H1 (cell line): ENCODE measurements at regions of chr18 and their contacts with region 1.

Region 1: DNA sequence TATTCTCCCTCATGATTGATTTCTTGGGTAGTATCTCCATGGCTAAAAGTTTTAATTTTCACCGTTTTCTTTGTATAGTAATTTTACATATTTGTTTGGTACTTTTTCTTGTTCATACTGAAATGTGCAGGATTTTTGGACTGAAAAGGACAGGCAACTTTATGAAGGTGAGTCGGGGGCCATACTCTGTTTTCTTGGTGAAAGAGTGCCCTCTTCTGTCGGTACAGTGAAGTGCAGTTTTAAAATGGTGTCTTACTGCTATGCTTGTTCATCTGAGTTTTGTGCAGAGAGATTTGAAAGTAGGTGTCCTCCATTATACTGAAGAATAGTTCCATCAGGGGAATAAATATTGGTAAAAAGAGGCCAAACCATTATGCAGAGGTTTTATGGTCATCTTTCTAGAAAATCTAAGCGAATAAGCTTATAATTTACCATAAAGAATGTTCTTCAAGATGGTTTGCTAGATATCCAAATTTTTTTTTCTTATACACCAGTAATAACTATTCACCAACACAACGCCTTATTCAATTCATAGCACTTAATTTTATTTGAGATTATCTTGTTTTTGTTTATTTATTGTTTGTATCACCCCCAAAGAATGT is 8.7 kb upstream of the SERPINB13 start:
- DNase-seq: peak in 1 of 2 experiments; percentile 64
- H3K4me3 ChIP-seq: no peak overlapping the region
- H3K27ac ChIP-seq: no peak overlapping the region
- H3K4me1 ChIP-seq: no peaks in the 10 kb centered on the region
- H3K27me3 ChIP-seq: no peaks in the 10 kb centered on the region
- CTCF ChIP-seq: peak in 2 of 3 experiments; percentile 75 to 77; a peak in 3 of 4 replicates
- EP300 ChIP-seq: no peak
- POLR2A ChIP-seq: no peak
- RAD21 ChIP-seq: peak; percentile 89 to 92

Region 2: DNA sequence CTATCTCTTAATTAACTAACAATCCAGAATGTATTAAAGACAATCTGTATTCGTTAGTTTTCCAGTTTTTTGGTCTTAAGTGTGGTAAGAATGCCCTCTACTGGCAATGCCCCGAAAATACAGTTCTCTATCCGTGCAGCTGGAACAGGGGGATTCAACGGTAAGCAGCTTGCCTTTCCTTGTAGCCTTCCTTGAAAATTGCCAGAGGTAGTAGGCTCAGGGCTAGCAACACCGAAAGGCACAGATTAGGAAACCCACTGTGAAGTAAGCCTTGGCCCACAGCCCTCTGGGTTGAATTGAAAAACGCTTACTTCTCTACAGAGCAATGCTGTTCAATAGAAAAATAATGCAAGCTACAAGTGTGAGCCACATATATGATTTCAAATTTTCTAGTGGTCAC is 139.1 kb before region 1 on chr18:
- CTCF ChIA-PET with region 1: interaction called, 10 read pairs
- POLR2A ChIA-PET with region 1: no interaction called
- DNase-seq: peak; percentile 43 to 61
- H3K4me3 ChIP-seq: no peak overlapping the region
- H3K27ac ChIP-seq: no peak overlapping the region
- H3K4me1 ChIP-seq: no peaks in the 10 kb centered on the region
- H3K27me3 ChIP-seq: no peaks in the 10 kb centered on the region
- CTCF ChIP-seq: peak; percentile 13 to 83 (median 70)
- EP300 ChIP-seq: no peak
- POLR2A ChIP-seq: no peak
- RAD21 ChIP-seq: peak; percentile 86

Region 3: DNA sequence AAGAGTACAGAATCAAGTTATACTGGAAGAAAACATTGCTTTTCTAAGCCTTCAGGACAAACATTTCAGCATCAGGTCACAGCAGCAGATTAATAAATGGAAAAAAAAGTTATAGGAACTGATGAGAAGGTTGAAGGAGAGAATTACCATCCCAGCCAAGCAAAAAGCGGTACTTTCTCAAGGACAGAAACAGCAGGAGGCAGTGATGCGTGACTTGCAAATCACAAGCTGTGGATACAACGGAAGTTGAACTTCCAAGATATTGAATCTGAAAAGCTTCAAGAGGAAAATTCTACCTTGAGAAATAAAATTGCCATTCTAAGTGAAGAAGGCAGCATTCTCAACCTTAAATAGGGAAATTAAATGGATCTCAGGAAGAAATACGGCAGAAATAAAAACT is 54.8 kb before region 1 on chr18:
- CTCF ChIA-PET with region 1: interaction called, 366 read pairs
- POLR2A ChIA-PET with region 1: no interaction called
- DNase-seq: no peak
- H3K4me3 ChIP-seq: no peak overlapping the region
- H3K27ac ChIP-seq: no peak overlapping the region
- H3K4me1 ChIP-seq: no peaks in the 10 kb centered on the region
- H3K27me3 ChIP-seq: no peaks in the 10 kb centered on the region
- CTCF ChIP-seq: no peak
- EP300 ChIP-seq: no peak
- POLR2A ChIP-seq: no peak
- RAD21 ChIP-seq: no peak

Region 4: DNA sequence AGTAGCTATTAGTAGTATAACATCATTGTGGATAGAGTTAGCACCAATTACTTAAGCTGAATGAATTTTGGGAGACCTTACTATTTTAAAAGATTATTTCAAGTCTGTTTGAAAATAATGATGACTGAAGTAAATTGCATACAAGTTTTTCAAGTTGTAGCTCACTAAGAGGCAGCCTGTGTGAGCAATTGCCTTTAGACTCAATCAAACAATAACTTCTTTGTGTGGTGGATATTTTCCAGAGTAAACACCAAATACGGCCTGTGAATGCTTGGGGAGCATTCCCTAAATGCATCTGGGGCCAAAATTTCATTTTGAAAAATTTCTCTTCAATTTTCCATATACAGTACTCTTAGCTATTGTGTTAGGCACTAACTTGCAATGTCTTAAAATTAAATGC is 28.4 kb before region 1 on chr18:
- CTCF ChIA-PET with region 1: interaction called, 16 read pairs
- POLR2A ChIA-PET with region 1: no interaction called
- DNase-seq: no peak
- H3K4me3 ChIP-seq: no peak overlapping the region
- H3K27ac ChIP-seq: no peak overlapping the region
- H3K4me1 ChIP-seq: no peaks in the 10 kb centered on the region
- H3K27me3 ChIP-seq: no peaks in the 10 kb centered on the region
- CTCF ChIP-seq: no peak
- EP300 ChIP-seq: no peak
- POLR2A ChIP-seq: no peak
- RAD21 ChIP-seq: no peak

Region 5: GRCh38 chr18:63676526-63676925 is 98.1 kb after region 1 on chr18:
- CTCF ChIA-PET with region 1: interaction called, 19 read pairs
- POLR2A ChIA-PET with region 1: no interaction called
- DNase-seq: no peak
- H3K4me3 ChIP-seq: no peak overlapping the region
- H3K27ac ChIP-seq: no peak overlapping the region
- H3K4me1 ChIP-seq: no peaks in the 10 kb centered on the region
- H3K27me3 ChIP-seq: no peaks in the 10 kb centered on the region
- CTCF ChIP-seq: peak; percentile 66 to 81 (median 77)
- EP300 ChIP-seq: no peak
- POLR2A ChIP-seq: no peak
- RAD21 ChIP-seq: peak; percentile 74 to 76

Region 6: DNA sequence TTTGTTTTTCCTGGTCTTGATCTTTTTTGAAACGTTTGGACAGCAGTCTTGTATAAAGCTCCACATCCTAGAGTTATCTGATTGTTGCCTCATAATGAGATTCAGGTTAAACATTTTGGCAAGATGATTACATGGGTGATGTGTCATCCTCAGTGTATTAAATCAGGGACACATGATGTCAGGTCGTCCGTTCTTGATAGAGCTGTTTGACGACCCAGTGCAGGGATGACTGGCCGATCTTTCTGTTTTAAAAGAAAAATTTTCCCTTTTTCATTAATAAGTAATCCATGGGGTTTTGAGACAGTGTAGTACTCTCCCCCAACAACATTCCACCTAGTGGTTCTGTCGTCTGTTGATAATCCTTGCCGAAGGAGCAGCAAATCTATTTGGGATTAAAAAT is 264.6 kb after region 1 on chr18:
- CTCF ChIA-PET with region 1: interaction called, 16 read pairs
- POLR2A ChIA-PET with region 1: no interaction called
- DNase-seq: no peak
- H3K4me3 ChIP-seq: no peak overlapping the region
- H3K27ac ChIP-seq: no peak overlapping the region
- H3K4me1 ChIP-seq: no peaks in the 10 kb centered on the region
- H3K27me3 ChIP-seq: no peaks in the 10 kb centered on the region
- CTCF ChIP-seq: no peak
- EP300 ChIP-seq: no peak
- POLR2A ChIP-seq: no peak
- RAD21 ChIP-seq: no peak

Region 7: GRCh38 chr18:63924551-63924950 is 346.1 kb after region 1 on chr18:
- CTCF ChIA-PET with region 1: no interaction called
- POLR2A ChIA-PET with region 1: no interaction called
- DNase-seq: no peak
- H3K4me3 ChIP-seq: no peak overlapping the region
- H3K27ac ChIP-seq: no peak overlapping the region
- H3K4me1 ChIP-seq: no peaks in the 10 kb centered on the region
- H3K27me3 ChIP-seq: no peaks in the 10 kb centered on the region
- CTCF ChIP-seq: no peak
- EP300 ChIP-seq: no peak
- POLR2A ChIP-seq: no peak
- RAD21 ChIP-seq: no peak

Region 8: GRCh38 chr18:63953811-63954210 is 375.4 kb after region 1 on chr18:
- CTCF ChIA-PET with region 1: no interaction called
- POLR2A ChIA-PET with region 1: no interaction called
- DNase-seq: no peak
- H3K4me3 ChIP-seq: no peak overlapping the region
- H3K27ac ChIP-seq: no peak overlapping the region
- H3K4me1 ChIP-seq: no peaks in the 10 kb centered on the region
- H3K27me3 ChIP-seq: no peaks in the 10 kb centered on the region
- CTCF ChIP-seq: no peak
- EP300 ChIP-seq: no peak
- POLR2A ChIP-seq: no peak
- RAD21 ChIP-seq: no peak